Activated naive CD4-positive, alpha-beta T cell treated with anti-CD3 and anti-CD28 coated beads for 36 hours (primary cell): ENCODE measurements at regions of chr10 and their contacts with region 1.

Region 1: GRCh38 chr10:76311752-76312636 is 880.6 kb downstream of the LRMDA start:
- DNase-seq: peak; percentile 28
- H3K4me3 Mint-ChIP-seq: no peak overlapping the region
- H3K27ac Mint-ChIP-seq: no peak overlapping the region
- H3K4me1 Mint-ChIP-seq: no peaks in the 10 kb centered on the region
- H3K27me3 Mint-ChIP-seq: peaks cover 2% of the 10 kb centered on the region

Region 2: DNA sequence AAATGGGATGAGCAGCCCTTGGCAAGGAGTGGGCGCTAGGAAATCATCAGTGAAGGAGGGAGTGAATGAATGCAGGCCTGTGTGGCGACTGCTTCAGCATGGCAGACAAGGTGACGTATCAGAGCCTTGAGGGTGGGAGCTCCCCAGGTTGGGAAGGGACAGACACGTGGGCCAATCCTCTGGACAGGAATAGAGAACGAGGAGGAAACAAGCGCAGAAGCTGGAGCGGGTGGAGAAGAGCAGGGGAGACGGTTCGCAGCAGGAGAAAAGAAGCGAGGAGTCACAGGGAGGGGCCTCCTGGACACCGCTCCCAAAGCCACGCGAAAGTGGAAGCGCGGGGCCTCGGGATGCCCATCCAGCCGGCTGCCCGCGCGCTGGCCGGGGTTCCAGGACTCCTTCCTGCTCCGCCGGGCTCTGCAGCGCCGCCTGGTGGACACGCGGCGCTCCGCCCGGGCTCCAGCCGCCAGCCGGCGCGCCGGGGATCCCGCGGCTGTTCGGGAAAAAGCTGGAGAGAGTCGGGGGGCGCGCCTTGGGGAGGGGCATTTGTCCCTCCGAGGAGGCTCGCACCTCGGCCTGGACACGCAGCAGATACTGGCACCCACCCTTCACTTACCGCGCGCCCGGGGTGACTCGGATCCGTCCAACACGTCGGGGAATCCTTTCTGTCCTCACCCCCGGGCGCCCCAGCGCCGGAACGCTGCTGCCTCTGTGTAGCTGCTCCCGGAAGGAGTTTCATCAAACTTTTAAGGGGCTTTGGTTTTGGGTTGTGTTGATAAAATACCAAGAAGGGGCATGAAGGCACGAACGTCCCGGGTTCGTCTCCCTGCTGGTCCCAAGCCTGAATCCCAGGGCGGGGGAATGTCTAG is 916.7 kb before region 1 on chr10:
- CTCF ChIA-PET with region 1: no interaction called
- intact Hi-C with region 1: loop called (anchors 2 kb)
- DNase-seq: peak; percentile 30
- H3K4me3 Mint-ChIP-seq: no peak overlapping the region
- H3K27ac Mint-ChIP-seq: no peak overlapping the region
- H3K4me1 Mint-ChIP-seq: peaks cover 8% of the 10 kb centered on the region
- H3K27me3 Mint-ChIP-seq: peaks cover 39% of the 10 kb centered on the region

Region 3: DNA sequence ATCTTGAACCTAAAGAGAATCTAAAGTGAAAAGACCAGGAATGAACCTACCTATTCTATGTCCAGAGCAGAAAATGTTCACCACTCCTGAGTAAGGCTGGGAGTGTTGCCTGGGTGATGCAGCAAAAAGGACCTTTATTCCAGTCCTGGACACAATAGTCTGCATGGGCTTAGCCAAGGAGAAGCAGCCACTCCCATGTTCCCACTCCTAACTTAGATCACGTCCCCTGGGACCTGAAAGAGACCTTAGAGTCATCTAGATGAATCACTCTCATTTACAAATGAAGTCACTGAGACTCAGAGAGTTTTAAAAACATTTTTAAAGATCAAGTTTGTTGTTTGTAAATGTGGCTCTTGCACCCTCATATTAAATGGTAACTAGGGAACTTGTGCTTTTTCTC is 562.2 kb after region 1 on chr10:
- CTCF ChIA-PET with region 1: no interaction called
- intact Hi-C with region 1: no loop called
- DNase-seq: no peak
- H3K4me3 Mint-ChIP-seq: no peak overlapping the region
- H3K27ac Mint-ChIP-seq: no peak overlapping the region
- H3K4me1 Mint-ChIP-seq: no peaks in the 10 kb centered on the region
- H3K27me3 Mint-ChIP-seq: peaks cover 8% of the 10 kb centered on the region